ENCODE measurements at regions of chr6 and their contacts with region 1.

Region 1: DNA sequence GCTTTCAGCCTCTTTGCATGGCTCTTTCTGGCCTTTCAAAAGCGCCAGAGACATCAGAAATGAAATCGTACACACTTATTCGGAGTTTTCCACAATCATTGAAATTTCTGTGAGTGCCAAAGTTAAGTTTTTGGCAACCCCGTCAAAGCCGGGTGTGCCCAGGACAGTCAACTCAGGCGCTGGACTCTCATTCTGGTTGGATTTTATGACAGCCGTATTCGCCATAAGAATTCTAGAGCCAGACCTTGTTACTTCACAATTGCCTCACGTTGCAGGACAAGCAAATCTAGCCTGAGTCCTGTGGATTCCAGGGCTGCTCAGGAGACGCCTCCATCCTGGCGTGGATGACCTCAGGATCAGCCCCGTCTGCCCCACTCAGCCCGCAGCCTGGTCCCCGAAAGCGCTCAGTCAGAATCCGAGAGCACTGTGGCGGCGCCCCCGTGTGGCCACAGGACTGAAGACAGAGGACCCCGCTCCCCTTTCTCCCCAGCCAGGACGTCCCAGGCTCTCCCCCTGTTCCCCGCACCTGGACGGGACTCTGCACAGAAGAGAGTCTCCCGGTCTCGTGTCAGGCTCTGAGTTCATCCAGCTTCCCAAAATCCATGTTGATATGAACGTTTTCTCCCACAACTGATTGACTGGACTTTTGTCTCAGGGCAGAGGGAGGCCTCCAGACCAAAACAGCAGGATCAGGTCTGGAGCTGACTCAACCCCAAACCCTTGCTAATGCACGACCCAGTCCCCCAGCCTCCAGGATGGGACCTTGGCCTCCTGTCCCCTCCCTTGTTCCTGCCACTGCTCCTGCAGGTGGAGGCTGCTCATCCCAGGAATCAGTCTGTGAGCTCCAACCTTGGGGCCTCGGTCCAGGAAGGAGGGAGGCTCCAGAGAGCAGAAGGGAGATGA is 38.2 kb downstream of the MICA start:
- DNase-seq: no peak
- H3K4me3 ChIP-seq: no peak overlapping the region
- H3K27me3 ChIP-seq: peaks cover 4% of the 10 kb centered on the region
- CTCF ChIP-seq: peak; percentile 95

Region 2: GRCh38 chr6:31399589-31400466 is 41.8 kb before region 1 on chr6:
- CTCF ChIA-PET with region 1: interaction called, 58 read pairs
- POLR2A ChIA-PET with region 1: no interaction called
- DNase-seq: peak; percentile 45
- H3K4me3 ChIP-seq: peak overlapping the region; percentile 80
- H3K27me3 ChIP-seq: no peaks in the 10 kb centered on the region
- CTCF ChIP-seq: peak; percentile 98

Region 3: DNA sequence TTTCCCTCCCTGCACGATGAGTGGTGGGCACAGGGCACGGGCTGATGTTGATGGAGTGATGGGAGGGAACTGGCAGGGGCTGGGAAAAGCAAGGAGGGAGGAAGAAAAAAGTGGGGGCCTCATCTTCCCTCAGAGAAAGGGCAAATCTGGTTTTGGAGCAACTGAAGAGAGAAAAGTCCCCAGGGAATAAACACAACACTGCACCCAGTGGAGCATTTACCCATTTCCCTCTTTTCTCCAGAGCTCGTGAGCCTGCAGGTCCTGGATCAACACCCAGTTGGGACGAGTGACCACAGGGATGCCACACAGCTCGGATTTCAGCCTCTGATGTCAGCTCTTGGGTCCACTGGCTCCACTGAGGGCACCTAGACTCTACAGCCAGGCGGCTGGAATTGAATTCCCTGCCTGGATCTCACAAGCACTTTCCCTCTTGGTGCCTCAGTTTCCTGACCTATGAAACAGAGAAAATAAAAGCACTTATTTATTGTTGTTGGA is 26.8 kb before region 1 on chr6:
- CTCF ChIA-PET with region 1: interaction called, 12 read pairs
- POLR2A ChIA-PET with region 1: no interaction called
- DNase-seq: no peak
- H3K4me3 ChIP-seq: no peak overlapping the region
- H3K27me3 ChIP-seq: no peaks in the 10 kb centered on the region
- CTCF ChIP-seq: no peak

Region 4: DNA sequence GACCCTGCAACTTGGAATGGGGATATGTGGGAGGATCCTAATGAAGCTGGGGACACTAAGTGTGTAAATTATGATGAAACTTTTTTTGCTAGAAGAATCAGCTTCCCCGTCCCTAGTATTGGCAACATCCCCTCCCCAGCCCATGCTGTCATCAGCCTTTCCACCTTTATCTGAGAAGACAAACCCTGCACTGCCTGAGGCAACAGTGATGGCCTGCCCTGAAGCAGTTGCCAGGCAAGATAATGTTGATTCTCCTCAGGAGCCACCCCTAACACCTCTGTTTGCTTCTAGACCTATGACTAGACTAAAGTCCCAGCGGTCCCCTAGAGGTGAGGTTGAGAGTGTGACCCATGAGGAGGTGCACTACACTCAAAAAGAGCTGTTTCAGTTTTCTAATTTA is 11.2 kb before region 1 on chr6:
- CTCF ChIA-PET with region 1: interaction called, 16 read pairs
- POLR2A ChIA-PET with region 1: no interaction called
- DNase-seq: no peak
- H3K4me3 ChIP-seq: no peak overlapping the region
- H3K27me3 ChIP-seq: no peaks in the 10 kb centered on the region
- CTCF ChIP-seq: no peak